ENCODE measurements at regions of chr1 and their contacts with region 1.

Region 1: GRCh38 chr1:221809031-221810029 is 67.4 kb upstream of the DUSP10 start:
- DNase-seq: no peak
- ATAC-seq: peak; percentile 73
- H3K4me3 Mint-ChIP-seq: peak overlapping the region; percentile 52
- H3K27ac Mint-ChIP-seq: peak overlapping the region; percentile 91
- H3K4me1 Mint-ChIP-seq: peaks cover 72% of the 10 kb centered on the region
- H3K27me3 Mint-ChIP-seq: no peaks in the 10 kb centered on the region
- CTCF ChIP-seq: no peak

Region 2: DNA sequence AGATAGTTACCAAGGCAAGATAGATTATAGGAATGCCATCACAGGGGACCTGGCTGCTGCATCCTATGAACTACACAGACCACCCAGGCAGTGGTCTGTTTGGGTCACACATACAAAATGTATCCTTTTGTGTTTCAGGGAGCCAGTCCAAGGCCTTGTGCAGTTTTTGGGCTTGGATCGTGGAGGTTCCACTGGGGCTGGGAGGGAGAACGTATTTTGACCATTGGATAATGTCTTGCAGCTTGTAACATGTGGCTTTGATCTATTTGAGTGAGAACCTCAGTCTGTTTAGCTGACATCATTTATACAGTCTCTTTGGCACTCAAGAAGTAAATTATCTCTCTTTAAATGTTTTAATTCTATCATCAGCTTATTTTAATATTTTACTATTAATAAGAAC is 214.8 kb before region 1 on chr1:
- CTCF ChIA-PET with region 1: no interaction called
- POLR2A ChIA-PET with region 1: no interaction called
- intact Hi-C with region 1: no loop called
- DNase-seq: no peak
- ATAC-seq: no peak
- H3K4me3 Mint-ChIP-seq: no peak overlapping the region
- H3K27ac Mint-ChIP-seq: no peak overlapping the region
- H3K4me1 Mint-ChIP-seq: peaks cover 8% of the 10 kb centered on the region
- H3K27me3 Mint-ChIP-seq: no peaks in the 10 kb centered on the region
- CTCF ChIP-seq: no peak

Region 3: DNA sequence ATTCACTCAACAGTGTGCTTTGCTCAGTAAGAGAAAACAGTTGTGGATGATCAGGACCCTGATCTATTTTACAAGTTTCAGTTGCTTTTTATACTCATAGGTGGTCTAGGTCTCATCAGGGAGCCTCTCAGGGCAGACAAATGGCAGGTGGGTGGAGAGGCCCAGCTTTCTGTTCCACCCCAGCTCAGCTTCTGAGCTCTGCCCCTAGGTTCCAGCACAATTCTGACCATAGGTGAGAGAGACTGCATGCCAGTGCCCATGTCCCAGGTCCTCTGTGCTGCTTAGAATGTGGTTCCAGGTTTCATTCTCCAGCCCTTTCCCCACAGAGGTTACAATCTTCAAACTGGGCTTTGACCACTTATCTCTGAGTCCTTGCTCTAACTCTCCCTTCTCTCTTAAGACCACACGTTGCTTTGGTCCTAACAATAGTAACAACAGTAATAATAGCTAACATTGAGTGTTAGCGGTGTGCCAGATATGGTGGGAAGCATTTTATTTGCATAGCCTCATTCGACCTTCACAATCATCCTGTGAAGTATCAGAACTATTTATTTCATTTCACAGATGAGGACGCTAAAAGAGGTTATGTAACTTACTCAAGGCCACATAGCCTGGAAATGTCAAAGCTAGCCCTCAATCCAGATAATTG is 47.9 kb before region 1 on chr1:
- CTCF ChIA-PET with region 1: no interaction called
- POLR2A ChIA-PET with region 1: no interaction called
- intact Hi-C with region 1: no loop called
- DNase-seq: no peak
- ATAC-seq: no peak
- H3K4me3 Mint-ChIP-seq: no peak overlapping the region
- H3K27ac Mint-ChIP-seq: no peak overlapping the region
- H3K4me1 Mint-ChIP-seq: peaks cover 29% of the 10 kb centered on the region
- H3K27me3 Mint-ChIP-seq: no peaks in the 10 kb centered on the region
- CTCF ChIP-seq: no peak

Region 4: DNA sequence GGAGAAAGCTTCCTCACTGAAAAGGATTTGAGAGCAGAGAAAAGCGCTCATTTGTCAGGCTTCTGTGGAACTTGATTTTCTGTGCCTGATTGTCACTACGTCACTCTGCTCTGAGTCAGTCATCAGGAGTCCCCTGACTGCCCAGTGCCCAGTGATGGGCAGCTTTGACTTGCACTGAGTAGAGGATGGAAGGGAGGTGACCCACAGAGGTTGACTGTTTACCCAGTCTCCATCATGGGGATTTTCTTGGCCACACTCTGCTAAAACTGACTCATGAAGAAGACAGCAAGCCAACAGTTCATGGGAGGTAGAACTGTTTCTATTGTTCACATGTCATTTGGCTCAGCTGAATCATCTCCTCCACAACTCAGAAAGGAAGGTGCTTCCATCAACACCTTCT is 14.7 kb after region 1 on chr1:
- CTCF ChIA-PET with region 1: no interaction called
- POLR2A ChIA-PET with region 1: interaction called, 21 read pairs
- intact Hi-C with region 1: loop called (anchors 1 kb)
- DNase-seq: no peak
- ATAC-seq: peak; percentile 40
- H3K4me3 Mint-ChIP-seq: peak overlapping the region; percentile 58
- H3K27ac Mint-ChIP-seq: peak overlapping the region; percentile 85
- H3K4me1 Mint-ChIP-seq: peaks cover 67% of the 10 kb centered on the region
- H3K27me3 Mint-ChIP-seq: no peaks in the 10 kb centered on the region
- CTCF ChIP-seq: no peak

Region 5: GRCh38 chr1:221829327-221830015 is 20.1 kb after region 1 on chr1:
- CTCF ChIA-PET with region 1: no interaction called
- POLR2A ChIA-PET with region 1: interaction called, 18 read pairs
- intact Hi-C with region 1: no loop called
- DNase-seq: no peak
- ATAC-seq: peak; percentile 64
- H3K4me3 Mint-ChIP-seq: peak overlapping the region; percentile 66
- H3K27ac Mint-ChIP-seq: peak overlapping the region; percentile 90
- H3K4me1 Mint-ChIP-seq: peaks cover 58% of the 10 kb centered on the region
- H3K27me3 Mint-ChIP-seq: no peaks in the 10 kb centered on the region
- CTCF ChIP-seq: no peak

Measured in activated B cell treated with CpG ODN at 0.5 μM for 24 hours (primary cell).